ENCODE measurements at regions of chr7 and their contacts with region 1.

Region 1: DNA sequence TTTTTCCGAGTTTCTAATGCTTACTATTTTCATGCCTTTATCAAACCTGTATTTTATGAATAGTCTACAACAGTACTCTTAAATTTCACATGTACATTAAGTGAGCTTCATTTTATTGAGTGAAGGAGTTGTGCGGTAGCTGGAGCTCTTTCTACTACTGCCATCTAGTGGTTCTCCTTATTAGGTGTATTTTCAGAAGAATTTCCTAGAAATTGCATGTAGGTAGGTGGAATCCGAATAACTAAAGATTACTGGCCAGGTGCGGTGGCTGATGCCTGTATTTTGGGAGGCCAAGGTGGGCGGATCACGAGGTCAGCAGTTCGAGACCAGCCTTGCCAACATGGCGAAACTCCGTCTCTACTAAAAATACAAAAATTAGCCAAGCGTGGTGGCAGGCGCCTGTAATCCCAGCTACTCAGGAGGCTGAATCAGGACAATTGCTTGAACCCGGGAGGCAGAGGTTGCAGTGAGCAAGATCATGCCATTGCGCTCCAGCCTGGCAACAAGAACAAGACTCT is 38.3 kb downstream of the LRRC72 start:
- DNase-seq: no peak
- H3K4me3 ChIP-seq: no peak overlapping the region
- H3K27ac ChIP-seq: no peak overlapping the region
- H3K4me1 ChIP-seq: peaks cover 0 to 7% (median 0%) of the 10 kb centered on the region in 4 donors
- H3K27me3 ChIP-seq: no peaks in the 10 kb centered on the region
- CTCF ChIP-seq: peak; percentile 72 to 81 (median 74)
- EP300 ChIP-seq: no peak
- POLR2A ChIP-seq: no peak

Region 2: GRCh38 chr7:16078076-16078952 is 486.7 kb before region 1 on chr7:
- in situ Hi-C with region 1: loop called (anchors 5 to 25 kb)
- intact Hi-C with region 1: loop called (anchors 1 kb)
- DNase-seq: no peak
- H3K4me3 ChIP-seq: no peak overlapping the region
- H3K27ac ChIP-seq: no peak overlapping the region
- H3K4me1 ChIP-seq: peaks cover 0 to 4% (median 1%) of the 10 kb centered on the region in 4 donors
- H3K27me3 ChIP-seq: no peaks in the 10 kb centered on the region
- CTCF ChIP-seq: peak; percentile 58 to 74 (median 64)
- EP300 ChIP-seq: no peak
- POLR2A ChIP-seq: no peak

Region 3: DNA sequence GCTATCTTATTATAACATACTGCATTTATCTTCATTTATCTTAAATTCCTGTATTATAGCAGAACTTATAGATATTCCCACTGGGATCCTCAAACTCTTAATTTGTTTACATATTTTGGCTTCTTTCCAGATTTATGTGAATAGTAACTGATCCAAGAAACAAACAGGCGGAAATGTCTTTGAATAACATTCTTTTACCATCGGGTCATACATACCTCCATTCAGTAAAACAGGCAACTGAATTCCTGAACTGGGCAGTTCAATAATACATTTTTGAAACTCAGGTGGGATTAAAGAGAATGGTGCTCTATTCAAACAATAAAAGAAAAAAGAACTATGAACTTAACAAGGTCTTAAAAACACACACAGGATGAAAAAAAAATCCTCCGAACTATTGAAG is 481.0 kb before region 1 on chr7:
- in situ Hi-C with region 1: loop called (anchors 5 to 25 kb)
- intact Hi-C with region 1: no loop called
- DNase-seq: no peak
- H3K4me3 ChIP-seq: no peak overlapping the region
- H3K27ac ChIP-seq: no peak overlapping the region
- H3K4me1 ChIP-seq: peaks cover 0 to 10% (median 2%) of the 10 kb centered on the region in 4 donors
- H3K27me3 ChIP-seq: no peaks in the 10 kb centered on the region
- CTCF ChIP-seq: no peak
- EP300 ChIP-seq: no peak
- POLR2A ChIP-seq: no peak

Region 4: GRCh38 chr7:16295558-16295957 is 269.4 kb before region 1 on chr7:
- in situ Hi-C with region 1: no loop called
- intact Hi-C with region 1: no loop called
- DNase-seq: no peak
- H3K4me3 ChIP-seq: no peak overlapping the region
- H3K27ac ChIP-seq: no peak overlapping the region
- H3K4me1 ChIP-seq: peaks cover 0 to 7% (median 3%) of the 10 kb centered on the region in 4 donors
- H3K27me3 ChIP-seq: no peaks in the 10 kb centered on the region
- CTCF ChIP-seq: no peak
- EP300 ChIP-seq: no peak
- POLR2A ChIP-seq: no peak

Region 5: DNA sequence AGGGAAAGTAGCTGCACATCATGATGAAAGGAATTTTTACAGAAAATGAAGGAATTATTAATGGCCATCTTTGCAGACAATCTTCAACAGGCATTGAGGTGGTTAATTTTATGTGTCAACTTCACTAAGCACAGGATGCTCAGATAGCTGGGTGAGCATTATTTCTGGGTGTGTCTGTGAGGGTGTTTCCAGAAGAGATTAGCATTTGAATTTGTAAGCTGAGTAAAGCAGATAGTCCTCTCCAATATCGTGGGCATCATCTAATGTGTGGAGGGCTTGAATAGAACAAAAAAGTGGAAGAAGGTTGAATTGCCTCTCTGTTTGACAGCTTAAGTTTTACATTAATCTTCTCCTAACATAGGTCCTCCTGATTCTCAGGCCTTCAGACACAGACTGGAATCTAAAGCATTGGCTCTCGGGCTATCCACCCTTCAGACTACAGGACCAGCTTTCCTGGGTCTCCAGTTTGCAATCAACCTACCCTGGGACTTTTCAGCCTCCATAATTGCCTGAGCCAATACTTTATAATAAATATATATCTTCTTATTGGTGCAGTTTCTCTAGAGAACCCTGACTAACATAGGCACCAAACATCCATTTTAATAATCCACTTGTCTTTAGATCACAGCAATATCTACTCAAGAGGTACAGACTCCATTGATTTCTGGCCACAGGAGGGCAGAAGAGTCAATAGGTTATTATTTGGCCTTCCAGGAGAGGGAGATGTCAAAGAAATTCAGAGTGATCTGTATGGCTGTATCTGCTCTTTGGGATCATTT is 133.1 kb before region 1 on chr7:
- in situ Hi-C with region 1: loop called in 2 of 4 experiments (anchors 10 to 25 kb)
- intact Hi-C with region 1: no loop called
- DNase-seq: peak; percentile 35
- H3K4me3 ChIP-seq: no peak overlapping the region
- H3K27ac ChIP-seq: no peak overlapping the region
- H3K4me1 ChIP-seq: peaks cover 0 to 4% (median 0%) of the 10 kb centered on the region in 4 donors
- H3K27me3 ChIP-seq: no peaks in the 10 kb centered on the region
- CTCF ChIP-seq: peak; percentile 27 to 70 (median 51)
- EP300 ChIP-seq: no peak
- POLR2A ChIP-seq: no peak